ENCODE measurements at regions of chr6 and their contacts with region 1.

Region 1: DNA sequence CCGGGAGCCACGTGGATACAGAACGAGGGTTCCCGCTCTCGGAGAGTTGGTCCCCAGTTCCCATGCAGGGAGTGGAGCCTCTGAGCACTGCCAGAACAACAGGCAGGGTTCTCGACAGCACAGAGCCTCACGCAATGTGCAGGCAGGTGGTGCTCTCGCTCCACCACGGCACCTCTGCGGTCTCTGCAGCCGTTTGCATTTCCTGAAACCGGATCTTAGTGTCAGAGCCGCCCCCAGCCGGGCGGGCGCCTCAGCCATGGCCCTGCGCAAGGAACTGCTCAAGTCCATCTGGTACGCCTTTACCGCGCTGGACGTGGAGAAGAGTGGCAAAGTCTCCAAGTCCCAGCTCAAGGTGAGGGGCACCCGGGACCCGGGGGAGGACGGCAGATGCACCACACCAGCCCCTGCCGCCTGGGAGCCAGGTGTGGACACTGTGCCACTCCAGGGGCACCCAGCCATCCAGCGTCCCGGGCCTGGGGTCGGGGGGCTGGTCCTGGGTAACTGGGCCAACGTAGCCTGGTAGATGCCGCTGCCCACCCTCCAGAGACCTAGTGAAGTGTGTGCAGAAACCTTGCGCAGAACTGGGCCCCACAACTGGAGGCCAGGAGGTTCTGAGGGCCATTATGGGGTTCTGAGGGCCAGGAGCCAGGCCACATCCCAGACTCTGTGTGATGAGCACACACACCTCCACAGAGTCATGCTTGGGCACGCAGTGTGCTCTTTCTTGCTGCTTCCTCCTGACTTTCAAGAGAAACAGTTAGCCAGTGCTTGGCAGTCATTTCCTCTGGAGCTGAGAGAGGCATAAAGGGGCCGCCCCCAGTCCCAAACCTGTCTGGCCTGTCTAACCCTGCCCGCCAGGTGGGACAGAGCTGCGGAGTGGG is at the start of gene DEF6:
- DNase-seq: peak; percentile 85
- H3K4me3 Mint-ChIP-seq: peak within 1 kb of the TSS; percentile 79
- H3K27ac Mint-ChIP-seq: peak within 1 kb of the TSS; percentile 87
- H3K4me1 Mint-ChIP-seq: peaks cover 38% of the 10 kb centered on the region
- H3K27me3 Mint-ChIP-seq: no peaks in the 10 kb centered on the region
- total RNA-seq, gene DEF6: 120 and 121 TPM in 2 replicates

Region 2: DNA sequence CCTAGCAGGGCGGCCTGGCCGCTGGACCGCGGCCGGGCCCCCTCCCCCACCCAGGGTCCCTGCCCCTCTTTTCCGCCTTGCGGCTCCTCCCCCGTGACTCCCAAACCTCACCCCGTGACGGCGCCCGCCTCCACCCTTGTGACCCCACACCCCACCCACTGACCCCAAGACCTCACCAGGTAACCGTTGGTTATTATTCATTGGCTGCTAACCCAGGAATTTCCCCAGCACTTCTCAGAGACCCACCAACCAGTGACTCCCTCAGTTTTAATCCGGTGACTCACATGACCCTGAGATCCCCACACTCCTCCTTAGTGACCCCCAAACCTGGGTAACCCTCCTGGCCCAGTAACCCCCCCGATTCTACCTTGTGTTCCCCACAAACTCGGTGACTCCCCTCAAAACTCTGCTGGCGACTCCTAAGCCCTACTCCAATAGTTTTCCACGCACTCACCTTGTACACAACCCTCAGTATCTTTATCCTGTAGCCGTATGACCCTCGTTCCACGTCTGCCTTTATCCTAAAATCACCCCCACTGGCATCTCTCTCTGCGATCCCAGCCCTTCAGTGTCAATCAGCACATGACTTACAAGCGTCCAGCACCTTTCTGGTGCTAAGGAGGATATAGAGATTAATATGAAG is 37.8 kb before region 1 on chr6:
- intact Hi-C with region 1: loop called (anchors 2 kb)
- DNase-seq: peak; percentile 55
- H3K4me3 Mint-ChIP-seq: peak overlapping the region; percentile 88
- H3K27ac Mint-ChIP-seq: peak overlapping the region; percentile 89
- H3K4me1 Mint-ChIP-seq: peaks cover 35% of the 10 kb centered on the region
- H3K27me3 Mint-ChIP-seq: no peaks in the 10 kb centered on the region

Region 3: DNA sequence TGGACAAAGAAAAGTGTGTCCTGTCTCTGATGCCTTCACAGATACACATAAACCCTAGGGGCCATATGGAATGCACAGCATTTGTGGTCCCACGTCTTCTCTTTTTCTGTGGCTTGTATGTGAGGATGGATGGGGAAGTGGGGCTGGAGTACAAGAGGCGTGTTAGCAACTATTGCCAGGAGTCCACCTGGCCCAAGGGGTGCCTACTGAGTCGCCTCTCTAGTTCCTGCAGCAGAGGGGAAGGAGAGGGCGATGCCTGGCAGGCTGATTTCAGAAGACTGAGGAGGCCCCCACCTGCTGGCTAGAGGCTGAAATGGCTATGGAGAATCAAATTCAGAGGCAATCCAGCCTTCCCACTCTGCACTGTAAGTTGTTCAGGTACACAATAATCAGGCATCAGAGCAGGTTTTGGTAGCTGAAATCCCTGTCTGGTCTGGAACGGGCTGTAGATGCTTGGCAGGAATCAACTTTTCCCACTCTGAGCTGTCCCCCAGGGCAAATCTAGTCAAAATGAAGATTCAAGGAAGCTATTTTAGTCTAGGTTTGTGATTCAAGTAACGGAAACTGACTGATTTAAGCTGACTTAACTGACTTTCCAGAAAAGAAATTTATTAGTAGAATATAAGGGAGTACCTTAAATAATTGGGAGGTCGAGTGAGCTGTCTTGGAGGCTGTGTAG is 29.6 kb after region 1 on chr6:
- intact Hi-C with region 1: loop called (anchors 1 kb)
- DNase-seq: peak; percentile 61
- H3K4me3 Mint-ChIP-seq: no peak overlapping the region
- H3K27ac Mint-ChIP-seq: peak overlapping the region; percentile 41
- H3K4me1 Mint-ChIP-seq: peaks cover 11% of the 10 kb centered on the region
- H3K27me3 Mint-ChIP-seq: no peaks in the 10 kb centered on the region

Region 4: DNA sequence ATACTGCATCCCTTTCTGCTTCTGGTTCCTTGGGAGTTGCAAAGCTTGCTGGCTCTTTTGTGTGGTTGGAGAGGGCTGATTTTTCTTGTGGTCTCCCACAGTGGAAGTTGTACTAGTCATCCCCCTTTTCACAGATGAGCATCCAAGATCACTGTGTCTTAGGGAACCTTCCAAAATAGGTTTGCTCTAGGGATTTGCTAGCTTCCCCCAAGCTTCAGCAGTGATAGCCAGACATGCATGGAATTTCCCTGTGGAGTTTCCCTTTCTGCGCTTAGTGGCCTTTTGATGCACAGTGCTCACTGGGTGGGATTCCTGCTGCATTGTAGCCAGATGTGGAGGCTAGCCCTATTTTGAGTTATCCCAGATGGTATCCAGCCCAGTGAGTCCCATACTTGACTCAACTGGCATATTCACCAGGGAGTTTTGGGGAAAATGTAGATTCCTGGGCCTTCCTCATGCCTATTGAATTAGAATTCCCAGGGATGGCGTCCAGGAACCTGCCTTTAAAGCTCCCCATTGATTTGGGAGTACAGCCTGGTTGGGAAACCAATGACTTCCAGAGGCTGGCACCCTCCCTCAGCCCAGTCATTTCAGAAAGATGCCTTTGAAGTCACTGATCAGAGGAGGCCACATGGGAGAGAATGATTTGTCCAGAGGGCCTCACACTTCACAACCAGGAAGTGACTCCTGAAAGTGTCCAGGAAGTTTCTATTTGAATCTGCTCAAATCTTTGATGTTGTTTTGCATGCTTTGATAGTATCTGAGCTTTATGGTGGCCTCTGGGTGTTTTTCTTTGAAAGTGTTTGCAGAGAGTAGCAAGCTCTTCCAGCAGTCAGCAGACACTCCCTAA is 70.4 kb after region 1 on chr6:
- intact Hi-C with region 1: loop called (anchors 2 kb)
- DNase-seq: peak; percentile 26
- H3K4me3 Mint-ChIP-seq: no peak overlapping the region
- H3K27ac Mint-ChIP-seq: peak overlapping the region; percentile 67
- H3K4me1 Mint-ChIP-seq: peaks cover 50% of the 10 kb centered on the region
- H3K27me3 Mint-ChIP-seq: no peaks in the 10 kb centered on the region

Region 5: GRCh38 chr6:35468181-35468979 is 170.5 kb after region 1 on chr6 and contains the start of gene RPL10A:
- intact Hi-C with region 1: loop called (anchors 1 kb)
- DNase-seq: peak; percentile 94
- H3K4me3 Mint-ChIP-seq: peak within 1 kb of the TSS; percentile 91
- H3K27ac Mint-ChIP-seq: peak within 1 kb of the TSS; percentile 98
- H3K4me1 Mint-ChIP-seq: peaks cover 24% of the 10 kb centered on the region
- H3K27me3 Mint-ChIP-seq: no peaks in the 10 kb centered on the region
- total RNA-seq, gene RPL10A: 1,727 and 1,773 TPM in 2 replicates

Measured in activated T-helper 2 cell treated with anti-CD3 and anti-CD28 coated beads, Interferon-gamma antibody, Interleukin-2, Interleukin-4, amounts not matched to agents 10 μg/mL and 5 μg/mL and 100 μg/mL, durations not matched to agents 14 hours and 24 hours and 36 hours (primary cell).